H1 (cell line): ENCODE measurements at regions of chr1 and their contacts with region 1.

Region 1: DNA sequence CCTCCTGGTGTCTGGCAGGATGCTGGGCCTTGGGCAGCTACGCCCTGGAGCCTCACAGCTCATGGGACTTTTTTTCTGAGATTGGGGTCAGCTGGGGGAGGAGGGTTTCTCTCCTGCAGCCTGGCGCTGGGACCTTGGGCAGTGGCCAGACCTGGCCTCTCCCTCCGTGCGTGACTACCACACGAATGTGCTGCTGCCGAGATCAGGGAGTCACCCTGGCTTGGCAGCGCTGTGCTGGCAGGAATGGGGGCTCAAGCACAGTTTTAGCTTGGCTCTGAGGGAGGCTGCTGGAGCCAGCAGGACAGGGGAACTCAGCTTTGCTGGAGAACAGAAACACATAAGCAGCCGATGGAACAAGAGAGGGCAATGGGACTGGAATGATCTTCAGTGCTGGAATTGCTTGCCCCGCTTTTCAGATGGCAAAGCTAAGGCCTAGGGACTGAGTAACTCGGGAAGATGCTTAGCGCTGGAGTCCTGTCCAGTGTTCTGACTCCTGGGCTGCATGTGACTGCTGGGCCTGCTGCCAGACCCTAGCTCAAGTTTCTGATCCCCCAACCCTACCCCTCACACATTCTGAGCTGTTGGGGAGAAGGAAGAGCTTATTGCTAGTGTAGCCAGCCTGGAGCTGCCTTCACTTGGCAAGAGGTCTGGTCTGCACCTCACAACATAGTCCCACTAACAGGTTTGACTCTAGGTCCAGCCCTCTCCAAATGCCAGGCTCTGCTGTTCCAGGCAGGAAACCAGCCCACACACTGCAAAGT is 69.9 kb downstream of the NAV1 start:
- DNase-seq: no peak
- H3K4me3 ChIP-seq: no peak overlapping the region
- H3K27ac ChIP-seq: no peak overlapping the region
- H3K4me1 ChIP-seq: 0 out of 7 replicates have a peak, but pooled peaks cover 0 to 3% (median 0%) of the 10 kb centered on the region in 4 experiments
- H3K27me3 ChIP-seq: no peaks in the 10 kb centered on the region
- CTCF ChIP-seq: no peak
- EP300 ChIP-seq: no peak
- POLR2A ChIP-seq: no peak
- RAD21 ChIP-seq: no peak

Region 2: GRCh38 chr1:201593200-201593921 is 15.5 kb before region 1 on chr1:
- CTCF ChIA-PET with region 1: interaction called, 20 read pairs
- POLR2A ChIA-PET with region 1: interaction called, 4 read pairs
- DNase-seq: no peak
- H3K4me3 ChIP-seq: no peak overlapping the region
- H3K27ac ChIP-seq: no peak overlapping the region
- H3K4me1 ChIP-seq: peaks cover 11 to 31% (median 22%) of the 10 kb centered on the region in 4 experiments
- H3K27me3 ChIP-seq: no peaks in the 10 kb centered on the region; a peak in 1 of 7 replicates
- CTCF ChIP-seq: no peak
- EP300 ChIP-seq: no peak
- POLR2A ChIP-seq: no peak
- RAD21 ChIP-seq: no peak

Region 3: GRCh38 chr1:201619513-201619912 is 10.7 kb after region 1 on chr1:
- CTCF ChIA-PET with region 1: interaction called, 14 read pairs
- POLR2A ChIA-PET with region 1: interaction called, 3 read pairs
- DNase-seq: no peak
- H3K4me3 ChIP-seq: no peak overlapping the region
- H3K27ac ChIP-seq: no peak overlapping the region
- H3K4me1 ChIP-seq: peaks cover 1 to 8% (median 5%) of the 10 kb centered on the region in 4 experiments; a peak in 4 of 7 replicates
- H3K27me3 ChIP-seq: no peaks in the 10 kb centered on the region
- CTCF ChIP-seq: no peak
- EP300 ChIP-seq: no peak
- POLR2A ChIP-seq: no peak
- RAD21 ChIP-seq: no peak